ENCODE measurements at regions of chr5 and their contacts with region 1.

Region 1: DNA sequence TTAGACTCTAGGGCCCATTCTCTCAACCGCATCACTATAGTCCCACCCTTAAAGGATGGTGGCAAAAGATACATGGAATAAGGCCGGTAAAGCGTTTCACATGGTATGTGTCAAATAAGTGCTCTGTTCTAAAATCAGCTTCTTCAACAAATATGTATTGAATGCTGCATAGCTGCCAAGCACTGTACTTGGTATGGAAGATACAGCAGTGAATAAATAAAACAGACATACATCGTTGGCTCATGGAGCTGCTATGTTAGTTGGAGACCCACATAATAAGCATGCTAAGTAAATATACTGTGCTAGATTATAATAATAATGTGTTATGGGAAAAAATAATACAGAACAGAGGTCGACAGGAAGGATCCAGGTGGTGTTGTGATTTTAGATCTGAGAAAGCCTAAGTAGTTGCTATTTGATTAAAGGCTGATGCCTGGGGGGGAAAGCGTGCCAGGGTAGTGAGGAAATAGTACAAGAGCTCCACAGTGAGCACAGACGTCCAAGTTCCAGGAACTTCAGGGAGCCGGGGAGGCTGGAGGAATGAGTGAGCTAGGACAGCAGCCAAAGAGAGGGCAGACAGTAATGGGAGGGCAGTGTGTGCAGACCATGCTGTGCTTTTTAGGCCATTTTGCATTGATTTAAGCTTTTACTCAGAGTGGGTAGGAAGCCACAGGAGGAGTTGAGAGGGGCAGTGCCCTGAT is 93.7 kb downstream of the JAKMIP2 start:
- DNase-seq: peak; percentile 88
- H3K4me3 ChIP-seq: no peak overlapping the region
- H3K27ac ChIP-seq: peak overlapping the region; percentile 31 to 79 (median 74)
- H3K4me1 ChIP-seq: peaks cover 2 to 47% (median 27%) of the 10 kb centered on the region in 4 donors
- H3K27me3 ChIP-seq: no peaks in the 10 kb centered on the region
- CTCF ChIP-seq: no peak
- EP300 ChIP-seq: peak in 2 of 4 donors; percentile 20 to 29
- POLR2A ChIP-seq: no peak

Region 2: GRCh38 chr5:147427521-147428401 is 261.0 kb before region 1 on chr5:
- intact Hi-C with region 1: no loop called
- DNase-seq: no peak
- H3K4me3 ChIP-seq: no peak overlapping the region
- H3K27ac ChIP-seq: peak overlapping the region; percentile 10 to 78 (median 74)
- H3K4me1 ChIP-seq: peaks cover 0 to 69% (median 68%) of the 10 kb centered on the region in 4 donors
- H3K27me3 ChIP-seq: no peaks in the 10 kb centered on the region
- CTCF ChIP-seq: no peak
- EP300 ChIP-seq: no peak
- POLR2A ChIP-seq: no peak

Region 3: GRCh38 chr5:147628058-147628895 is 60.5 kb before region 1 on chr5:
- intact Hi-C with region 1: loop called (anchors 5 kb)
- DNase-seq: no peak
- H3K4me3 ChIP-seq: no peak overlapping the region
- H3K27ac ChIP-seq: no peak overlapping the region
- H3K4me1 ChIP-seq: no peaks in the 10 kb centered on the region
- H3K27me3 ChIP-seq: no peaks in the 10 kb centered on the region
- CTCF ChIP-seq: peak; percentile 70 to 80 (median 78)
- EP300 ChIP-seq: no peak
- POLR2A ChIP-seq: no peak

Region 4: DNA sequence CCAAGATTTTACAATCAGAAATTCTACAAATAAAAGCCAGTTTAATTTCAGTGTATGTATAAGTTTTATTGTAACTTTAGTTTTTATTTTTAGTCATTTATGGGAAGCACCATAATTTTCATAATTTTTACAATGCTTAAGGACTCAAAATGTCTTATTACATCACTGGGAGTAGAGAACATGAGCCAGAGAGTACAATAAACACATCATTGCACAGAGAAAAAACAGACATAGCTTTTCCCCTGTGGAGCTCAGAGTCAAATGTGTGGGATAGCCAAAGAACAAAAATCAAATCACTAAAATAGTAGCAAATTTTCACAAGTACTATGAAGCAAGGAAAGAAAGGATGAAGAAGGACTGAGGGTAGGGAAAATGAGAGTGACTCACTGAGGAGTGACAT is 99.2 kb after region 1 on chr5:
- intact Hi-C with region 1: loop called (anchors 5 kb)
- DNase-seq: no peak
- H3K4me3 ChIP-seq: no peak overlapping the region
- H3K27ac ChIP-seq: peak overlapping the region in 3 of 4 donors; percentile 67 to 71 (median 67)
- H3K4me1 ChIP-seq: peaks cover 2 to 30% (median 23%) of the 10 kb centered on the region in 4 donors
- H3K27me3 ChIP-seq: no peaks in the 10 kb centered on the region
- CTCF ChIP-seq: no peak
- EP300 ChIP-seq: peak; percentile 16 to 78 (median 38)
- POLR2A ChIP-seq: no peak